Prostate gland (tissue), 2 donors: ENCODE measurements at regions of chr17 and their contacts with region 1.

Region 1: GRCh38 chr17:5587438-5588032 is 3.2 kb upstream of the NLRP1 start:
- DNase-seq: peak; percentile 42
- H3K4me3 ChIP-seq: no peak overlapping the region
- H3K27ac ChIP-seq: no peak overlapping the region
- H3K4me1 ChIP-seq: no peaks in the 10 kb centered on the region
- H3K27me3 ChIP-seq: peaks cover 2% of the 10 kb centered on the region
- CTCF ChIP-seq: peak; percentile 84 to 92 (median 88)
- POLR2A ChIP-seq: no peak

Region 2: GRCh38 chr17:6421700-6422604 is 834.4 kb after region 1 on chr17:
- intact Hi-C with region 1: loop called (anchors 2 kb)
- DNase-seq: peak; percentile 61
- H3K4me3 ChIP-seq: no peak overlapping the region
- H3K27ac ChIP-seq: no peak overlapping the region
- H3K4me1 ChIP-seq: no peaks in the 10 kb centered on the region
- H3K27me3 ChIP-seq: no peaks in the 10 kb centered on the region
- CTCF ChIP-seq: peak; percentile 53 to 85 (median 80)
- POLR2A ChIP-seq: no peak